ENCODE measurements at regions of chr17 and their contacts with region 1.

Region 1: GRCh38 chr17:50931144-50931908 is 65.2 kb upstream of the TOB1 start:
- DNase-seq: no peak
- H3K4me3 ChIP-seq: peak overlapping the region; percentile 40 to 46
- H3K27ac ChIP-seq: peak overlapping the region; percentile 96
- H3K4me1 ChIP-seq: peaks cover 23% of the 10 kb centered on the region
- H3K27me3 ChIP-seq: no peaks in the 10 kb centered on the region
- CTCF ChIP-seq: no peak
- POLR2A ChIP-seq: no peak

Region 2: GRCh38 chr17:50949989-50950881 is 18.9 kb after region 1 on chr17:
- intact Hi-C with region 1: loop called (anchors 2 kb)
- DNase-seq: peak in 1 of 2 donors; percentile 96
- H3K4me3 ChIP-seq: peak overlapping the region in 1 of 2 donors; percentile 12
- H3K27ac ChIP-seq: peak overlapping the region; percentile 93
- H3K4me1 ChIP-seq: peaks cover 52% of the 10 kb centered on the region
- H3K27me3 ChIP-seq: no peaks in the 10 kb centered on the region
- CTCF ChIP-seq: peak; percentile 26 to 77 (median 40)
- POLR2A ChIP-seq: peak in 1 of 2 donors; percentile 3

Region 3: GRCh38 chr17:51185763-51186332 is 254.5 kb after region 1 on chr17:
- intact Hi-C with region 1: no loop called
- DNase-seq: peak in 1 of 2 donors; percentile 16
- H3K4me3 ChIP-seq: no peak overlapping the region
- H3K27ac ChIP-seq: no peak overlapping the region
- H3K4me1 ChIP-seq: no peaks in the 10 kb centered on the region
- H3K27me3 ChIP-seq: no peaks in the 10 kb centered on the region
- CTCF ChIP-seq: no peak
- POLR2A ChIP-seq: no peak